Activated CD4-positive, alpha-beta T cell treated with anti-CD3 and anti-CD28 coated beads for 36 hours (primary cell): ENCODE measurements at regions of chr2 and their contacts with region 1.

Region 1: DNA sequence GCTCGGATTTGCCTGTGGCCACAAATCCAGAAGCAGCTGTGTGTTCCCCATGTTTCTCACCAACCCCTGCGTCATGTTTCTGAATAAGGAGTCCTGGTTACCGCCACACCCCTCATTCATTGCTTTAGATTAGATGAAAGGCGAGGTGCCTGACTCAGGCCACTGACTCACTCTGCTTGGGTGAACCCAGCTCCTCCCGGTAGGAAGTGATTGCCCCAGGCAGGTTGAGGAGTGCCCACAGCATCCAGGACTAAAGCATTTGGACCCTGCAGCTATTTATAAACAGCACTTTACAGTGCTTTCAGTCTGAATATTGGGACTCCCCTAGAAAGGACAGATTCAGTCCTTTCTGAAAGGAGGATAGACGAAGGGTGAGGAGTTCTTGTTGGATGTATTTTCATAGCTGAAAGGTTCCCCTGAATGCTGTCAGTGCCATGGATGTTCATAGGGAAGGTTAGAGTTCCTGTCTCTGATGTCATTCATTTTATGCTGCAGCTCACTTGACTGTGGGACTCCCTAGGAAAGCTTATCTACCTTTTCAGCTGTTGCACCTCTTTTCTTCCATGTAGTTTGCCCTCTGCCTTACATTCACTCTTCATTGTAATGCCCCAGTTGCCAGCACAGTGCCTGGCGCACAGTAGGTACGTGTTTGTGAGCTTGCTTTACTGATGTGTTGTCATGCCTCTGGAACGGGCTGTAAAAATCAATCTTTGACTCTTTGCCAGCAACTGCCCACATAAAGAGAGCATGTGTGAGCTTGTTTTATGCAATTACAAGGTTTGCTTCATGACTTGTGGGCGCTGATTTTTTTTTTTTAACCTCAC is 14.9 kb downstream of the ITGA6 start:
- DNase-seq: peak; percentile 82
- ATAC-seq: peak; percentile 70
- H3K4me3 Mint-ChIP-seq: peak overlapping the region; percentile 32
- H3K27ac Mint-ChIP-seq: peak overlapping the region; percentile 75
- H3K4me1 Mint-ChIP-seq: peaks cover 49% of the 10 kb centered on the region
- H3K27me3 Mint-ChIP-seq: no peaks in the 10 kb centered on the region

Region 2: GRCh38 chr2:172253190-172254052 is 188.9 kb before region 1 on chr2:
- CTCF ChIA-PET with region 1: no interaction called
- POLR2A ChIA-PET with region 1: no interaction called
- intact Hi-C with region 1: loop called in 1 of 2 experiments (anchors 5 kb)
- DNase-seq: peak; percentile 91
- ATAC-seq: peak; percentile 96
- H3K4me3 Mint-ChIP-seq: no peak overlapping the region
- H3K27ac Mint-ChIP-seq: peak overlapping the region; percentile 40
- H3K4me1 Mint-ChIP-seq: peaks cover 36% of the 10 kb centered on the region
- H3K27me3 Mint-ChIP-seq: peaks cover 9% of the 10 kb centered on the region

Region 3: DNA sequence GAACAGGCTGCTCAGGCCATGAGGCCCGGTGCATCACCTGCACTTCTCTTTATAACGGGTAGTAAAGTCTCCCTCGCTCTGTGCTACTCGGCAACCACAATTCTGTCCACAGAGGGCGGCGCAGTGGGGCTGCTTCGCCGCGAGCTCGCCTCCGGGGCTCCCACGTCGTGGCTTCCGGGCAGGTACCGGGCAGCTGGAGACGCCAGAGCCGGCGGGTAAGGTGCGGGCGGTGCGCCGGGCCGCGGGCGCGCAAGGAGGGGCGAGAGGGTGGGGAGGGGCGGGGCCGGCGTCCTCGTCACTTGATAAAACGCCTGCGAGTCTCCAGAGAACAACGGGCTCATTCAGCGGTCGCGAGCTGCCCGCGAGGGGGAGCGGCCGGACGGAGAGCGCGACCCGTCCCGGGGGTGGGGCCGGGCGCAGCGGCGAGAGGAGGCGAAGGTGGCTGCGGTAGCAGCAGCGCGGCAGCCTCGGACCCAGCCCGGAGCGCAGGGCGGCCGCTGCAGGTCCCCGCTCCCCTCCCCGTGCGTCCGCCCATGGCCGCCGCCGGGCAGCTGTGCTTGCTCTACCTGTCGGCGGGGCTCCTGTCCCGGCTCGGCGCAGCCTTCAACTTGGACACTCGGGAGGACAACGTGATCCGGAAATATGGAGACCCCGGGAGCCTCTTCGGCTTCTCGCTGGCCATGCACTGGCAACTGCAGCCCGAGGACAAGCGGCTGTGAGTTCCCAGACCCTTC is 14.9 kb before region 1 on chr2 and contains the start of gene ITGA6:
- CTCF ChIA-PET with region 1: interaction called, 142 read pairs
- POLR2A ChIA-PET with region 1: interaction called, 16 read pairs
- intact Hi-C with region 1: loop called in 1 of 2 experiments (anchors 1 kb)
- DNase-seq: peak; percentile 85
- ATAC-seq: peak; percentile 59
- H3K4me3 Mint-ChIP-seq: peak within 1 kb of the TSS; percentile 80
- H3K27ac Mint-ChIP-seq: peak within 1 kb of the TSS; percentile 73
- H3K4me1 Mint-ChIP-seq: peaks cover 79% of the 10 kb centered on the region
- H3K27me3 Mint-ChIP-seq: peaks cover 2% of the 10 kb centered on the region
- total RNA-seq, gene ITGA6: 7.8 to 7.9 TPM

Region 4: DNA sequence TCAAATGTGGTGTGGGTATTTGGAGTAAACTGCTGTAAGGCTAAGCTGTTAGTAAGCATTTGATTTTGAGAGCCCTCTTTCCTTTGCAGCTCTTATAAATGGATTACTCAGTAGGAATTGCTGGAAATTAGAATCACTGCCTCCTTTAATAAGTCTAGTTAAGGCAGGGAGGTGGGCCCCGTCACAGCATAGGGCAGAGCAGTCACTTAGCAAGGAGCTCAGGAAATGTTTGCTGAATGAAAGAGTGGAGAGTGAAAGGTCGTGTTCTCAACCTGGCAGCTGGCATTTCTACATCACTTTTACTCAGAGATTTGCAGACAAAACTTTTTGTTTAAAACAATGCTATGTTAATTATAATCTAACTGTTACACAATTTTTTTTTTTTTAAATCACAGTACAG is 10.6 kb after region 1 on chr2:
- CTCF ChIA-PET with region 1: interaction called, 405 read pairs
- POLR2A ChIA-PET with region 1: interaction called, 4 read pairs
- intact Hi-C with region 1: no loop called
- DNase-seq: no peak
- ATAC-seq: no peak
- H3K4me3 Mint-ChIP-seq: no peak overlapping the region
- H3K27ac Mint-ChIP-seq: no peak overlapping the region
- H3K4me1 Mint-ChIP-seq: peaks cover 73% of the 10 kb centered on the region
- H3K27me3 Mint-ChIP-seq: no peaks in the 10 kb centered on the region